Activated CD8-positive, alpha-beta T cell treated with anti-CD3 and anti-CD28 coated beads for 36 hours (primary cell): ENCODE measurements at regions of chr18 and their contacts with region 1.

Region 1: DNA sequence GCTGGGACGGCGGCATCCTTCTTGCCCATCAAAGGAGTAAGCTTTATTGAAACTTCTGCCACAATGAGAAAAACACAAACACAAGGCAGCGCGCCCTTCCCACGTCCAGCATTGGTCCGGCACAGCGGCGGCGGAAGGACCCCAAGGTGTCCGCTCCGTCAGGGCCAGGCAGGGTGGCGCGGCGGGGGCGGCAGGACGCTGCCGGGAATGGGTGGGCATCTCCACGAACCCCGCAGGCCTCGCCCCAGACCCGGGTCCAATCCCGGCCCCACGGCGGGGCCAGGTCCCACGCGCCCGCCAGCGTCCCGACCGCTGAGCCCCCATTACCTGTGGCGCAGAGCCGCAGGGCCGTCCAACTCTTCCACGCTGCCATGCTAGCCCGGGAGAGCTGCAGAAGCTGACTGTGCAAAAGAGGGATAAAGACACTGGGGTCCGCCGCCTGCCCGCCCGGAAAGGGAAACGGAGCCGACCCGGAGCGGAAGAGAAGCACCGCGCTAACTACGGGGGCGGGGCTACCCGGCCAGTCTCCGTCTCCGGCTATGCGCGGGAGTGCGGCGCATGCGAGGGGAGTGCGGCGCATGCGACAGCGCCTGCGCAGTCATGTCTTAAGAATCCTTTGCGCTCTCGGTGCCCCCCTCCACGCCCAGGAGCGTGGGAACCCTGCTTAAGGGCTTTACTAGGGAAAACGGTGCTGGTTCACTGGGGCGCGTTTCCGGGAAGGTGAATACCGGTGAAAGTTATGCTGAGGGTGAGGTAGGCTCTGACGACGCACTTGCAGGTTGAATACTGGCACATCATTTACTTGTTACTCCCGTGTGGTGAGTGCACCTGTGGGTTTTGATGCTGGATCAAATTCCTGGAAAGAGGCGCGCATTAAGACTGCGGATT is at the start of gene TMX3:
- DNase-seq: peak; percentile 94
- ATAC-seq: peak; percentile 99
- H3K4me3 Mint-ChIP-seq: peak within 1 kb of the TSS; percentile 93
- H3K27ac Mint-ChIP-seq: peak within 1 kb of the TSS; percentile 95
- H3K4me1 Mint-ChIP-seq: peaks cover 30% of the 10 kb centered on the region
- H3K27me3 Mint-ChIP-seq: no peaks in the 10 kb centered on the region
- CTCF ChIP-seq: no peak
- total RNA-seq, gene TMX3: 39.7 to 51.4 TPM

Region 2: DNA sequence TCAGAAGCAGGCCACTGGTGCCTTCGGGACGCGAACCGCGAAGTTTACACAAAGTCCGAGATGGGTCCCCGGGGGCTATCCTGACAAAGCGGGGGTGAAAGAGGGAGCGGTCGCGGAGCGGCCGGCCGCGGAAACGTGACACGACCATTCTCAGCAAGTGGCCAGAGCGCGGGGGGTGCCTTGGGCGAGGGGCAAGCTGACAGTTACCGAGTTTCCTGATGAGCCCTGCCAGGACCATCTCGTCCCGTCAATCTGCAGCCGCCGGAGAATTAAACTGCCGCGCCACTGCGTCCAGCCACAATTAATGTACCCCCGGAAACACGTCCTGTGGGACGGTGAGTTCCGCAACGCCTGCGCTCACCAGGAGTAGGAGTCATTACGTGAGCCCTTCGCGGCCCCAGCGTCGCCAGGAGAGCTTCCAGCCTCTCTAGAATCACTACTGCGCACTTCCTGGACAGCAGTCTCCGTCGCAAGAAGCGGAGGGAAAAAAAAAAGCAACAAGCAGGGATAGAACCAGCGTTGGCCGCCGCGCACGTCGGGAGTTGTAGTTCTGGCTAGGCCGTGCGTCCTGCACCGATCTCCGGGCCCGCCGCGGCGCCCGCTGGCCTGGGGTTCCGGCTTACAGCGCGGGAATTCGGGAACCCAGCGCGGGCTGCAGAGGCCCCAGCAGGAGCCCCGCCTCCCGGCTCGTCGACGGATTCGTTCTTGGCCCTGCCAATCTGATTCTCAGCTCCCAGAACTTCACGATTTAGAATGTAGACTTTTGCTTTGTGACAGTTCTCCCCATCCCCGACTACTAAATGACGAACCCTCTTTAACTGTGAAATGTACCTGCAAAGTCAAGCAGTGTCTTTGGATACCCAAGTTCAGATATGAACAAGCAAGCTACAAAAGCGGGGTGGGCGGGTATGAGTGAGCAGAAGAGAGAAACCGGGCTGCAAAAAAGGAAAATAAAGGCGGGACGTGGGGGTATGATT is 1490.9 kb after region 1 on chr18 and contains the start of gene RTTN:
- CTCF ChIA-PET with region 1: no interaction called
- POLR2A ChIA-PET with region 1: no interaction called
- intact Hi-C with region 1: loop called (anchors 5 kb)
- DNase-seq: peak; percentile 93
- ATAC-seq: peak; percentile 95
- H3K4me3 Mint-ChIP-seq: peak within 1 kb of the TSS; percentile 93
- H3K27ac Mint-ChIP-seq: peak within 1 kb of the TSS; percentile 99
- H3K4me1 Mint-ChIP-seq: peaks cover 27% of the 10 kb centered on the region
- H3K27me3 Mint-ChIP-seq: peaks cover 2% of the 10 kb centered on the region
- CTCF ChIP-seq: no peak
- total RNA-seq, gene RTTN: 27.0 to 27.2 TPM